Activated CD4-positive, alpha-beta T cell treated with anti-CD3 and anti-CD28 coated beads for 36 hours (primary cell): ENCODE measurements at regions of chr10 and their contacts with region 1.

Region 1: GRCh38 chr10:44974628-44975431 is 3.8 kb downstream of the DEPP1 start:
- DNase-seq: peak; percentile 78
- ATAC-seq: peak; percentile 93
- H3K4me3 Mint-ChIP-seq: peak overlapping the region; percentile 49
- H3K27ac Mint-ChIP-seq: no peak overlapping the region
- H3K4me1 Mint-ChIP-seq: peaks cover 9% of the 10 kb centered on the region
- H3K27me3 Mint-ChIP-seq: no peaks in the 10 kb centered on the region

Region 2: GRCh38 chr10:44932517-44933450 is 42.0 kb before region 1 on chr10:
- CTCF ChIA-PET with region 1: interaction called, 23 read pairs
- POLR2A ChIA-PET with region 1: no interaction called
- intact Hi-C with region 1: loop called (anchors 1 kb)
- DNase-seq: peak; percentile 91
- ATAC-seq: peak; percentile 99
- H3K4me3 Mint-ChIP-seq: no peak overlapping the region
- H3K27ac Mint-ChIP-seq: no peak overlapping the region
- H3K4me1 Mint-ChIP-seq: peaks cover 5% of the 10 kb centered on the region
- H3K27me3 Mint-ChIP-seq: no peaks in the 10 kb centered on the region

Region 3: DNA sequence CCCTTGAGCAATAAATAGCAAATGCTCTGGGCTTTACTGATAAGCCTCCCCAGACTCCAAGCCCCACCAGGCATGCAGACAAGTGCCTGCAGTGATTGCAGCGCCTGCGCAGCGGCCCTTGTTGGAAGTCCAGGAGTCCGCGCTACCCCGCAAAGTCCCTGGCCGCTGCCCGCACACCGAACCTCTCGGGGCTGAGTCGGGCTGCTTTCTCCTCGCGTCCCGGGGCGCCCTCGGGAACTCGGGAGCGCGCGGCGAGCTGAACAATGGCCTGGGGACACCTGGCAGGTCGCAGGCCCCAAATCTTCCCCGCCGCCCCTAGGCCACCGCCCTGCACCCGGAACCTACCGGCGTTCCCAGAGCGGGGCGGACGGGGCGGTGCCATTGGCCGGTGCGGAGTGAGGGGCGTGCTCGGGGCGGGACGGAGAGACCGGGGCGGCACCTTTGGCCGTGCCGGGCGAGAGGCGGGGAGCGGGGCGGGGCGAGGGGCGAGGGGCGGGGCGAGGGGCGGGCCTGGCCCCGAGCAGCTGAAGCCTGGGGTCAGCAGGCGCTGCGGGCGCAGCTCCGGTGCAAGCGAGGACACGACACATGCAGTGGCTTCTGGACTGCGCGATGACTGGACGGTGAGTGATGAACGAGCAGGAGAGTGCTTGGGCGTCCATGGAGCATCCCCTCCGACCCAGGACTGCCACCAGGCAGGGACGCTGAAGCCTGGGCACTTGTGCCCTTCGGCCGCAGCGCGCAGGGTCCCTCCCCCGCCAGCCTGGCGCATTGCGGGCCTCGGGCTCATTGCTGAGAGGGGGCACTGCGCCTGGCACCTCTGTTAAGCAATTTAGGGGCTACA is 15.4 kb before region 1 on chr10 and contains the start of gene RASSF4:
- CTCF ChIA-PET with region 1: no interaction called
- POLR2A ChIA-PET with region 1: no interaction called
- intact Hi-C with region 1: loop called (anchors 1 to 2 kb)
- DNase-seq: peak; percentile 96
- ATAC-seq: peak; percentile 100
- H3K4me3 Mint-ChIP-seq: peak within 1 kb of the TSS; percentile 80
- H3K27ac Mint-ChIP-seq: peak within 1 kb of the TSS; percentile 70
- H3K4me1 Mint-ChIP-seq: peaks cover 19% of the 10 kb centered on the region
- H3K27me3 Mint-ChIP-seq: no peaks in the 10 kb centered on the region
- total RNA-seq, gene RASSF4: 1.0 to 1.3 TPM

Region 4: GRCh38 chr10:45000752-45001380 is 26.0 kb after region 1 on chr10 and contains the start of gene ZNF22:
- CTCF ChIA-PET with region 1: interaction called, 5 read pairs
- POLR2A ChIA-PET with region 1: no interaction called
- intact Hi-C with region 1: loop called in 1 of 2 experiments (anchors 1 kb)
- DNase-seq: peak; percentile 78
- ATAC-seq: peak; percentile 74
- H3K4me3 Mint-ChIP-seq: peak within 1 kb of the TSS; percentile 84
- H3K27ac Mint-ChIP-seq: peak within 1 kb of the TSS; percentile 89
- H3K4me1 Mint-ChIP-seq: peaks cover 24% of the 10 kb centered on the region
- H3K27me3 Mint-ChIP-seq: no peaks in the 10 kb centered on the region
- total RNA-seq, gene ZNF22: 18.8 to 21.6 TPM